ENCODE measurements at regions of chr1 and their contacts with region 1.

Region 1: DNA sequence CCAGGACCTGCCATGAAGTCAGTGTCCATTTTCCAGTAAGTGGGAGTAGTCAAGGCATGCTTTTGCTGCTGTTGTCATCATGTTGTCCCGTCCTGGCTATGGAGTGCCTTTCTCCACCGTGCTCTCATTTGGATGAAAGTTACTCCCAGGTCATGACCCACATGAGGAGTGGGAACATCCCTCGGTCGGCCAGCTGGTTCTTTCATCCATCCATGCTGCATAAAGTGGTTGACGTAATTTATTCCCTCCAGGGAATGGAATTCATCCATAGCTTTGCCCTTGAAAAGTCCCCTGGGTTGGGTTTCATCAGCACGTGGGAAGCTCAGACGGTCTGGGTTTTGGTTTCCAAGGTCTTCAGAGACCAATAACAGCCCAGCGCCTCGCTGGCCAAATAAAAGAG is 11.6 kb downstream of the PLA2G2A start:
- DNase-seq: no peak
- H3K4me3 ChIP-seq: no peak overlapping the region
- H3K27ac ChIP-seq: no peak overlapping the region
- H3K4me1 ChIP-seq: no peaks in the 10 kb centered on the region
- H3K27me3 ChIP-seq: no peaks in the 10 kb centered on the region
- CTCF ChIP-seq: no peak

Region 2: GRCh38 chr1:21149862-21150432 is 1182.1 kb after region 1 on chr1:
- CTCF ChIA-PET with region 1: interaction called, 17 read pairs
- POLR2A ChIA-PET with region 1: no interaction called
- intact Hi-C with region 1: no loop called
- DNase-seq: peak; percentile 54 to 68
- H3K4me3 ChIP-seq: no peak overlapping the region
- H3K27ac ChIP-seq: peak overlapping the region; percentile 62
- H3K4me1 ChIP-seq: no peaks in the 10 kb centered on the region; the same call in 1 of the 2 replicates
- H3K27me3 ChIP-seq: no peaks in the 10 kb centered on the region
- CTCF ChIP-seq: no peak

Measured in PC-9 (cell line).